Caco-2 (cell line): ENCODE measurements at regions of chr6 and their contacts with region 1.

Region 1: DNA sequence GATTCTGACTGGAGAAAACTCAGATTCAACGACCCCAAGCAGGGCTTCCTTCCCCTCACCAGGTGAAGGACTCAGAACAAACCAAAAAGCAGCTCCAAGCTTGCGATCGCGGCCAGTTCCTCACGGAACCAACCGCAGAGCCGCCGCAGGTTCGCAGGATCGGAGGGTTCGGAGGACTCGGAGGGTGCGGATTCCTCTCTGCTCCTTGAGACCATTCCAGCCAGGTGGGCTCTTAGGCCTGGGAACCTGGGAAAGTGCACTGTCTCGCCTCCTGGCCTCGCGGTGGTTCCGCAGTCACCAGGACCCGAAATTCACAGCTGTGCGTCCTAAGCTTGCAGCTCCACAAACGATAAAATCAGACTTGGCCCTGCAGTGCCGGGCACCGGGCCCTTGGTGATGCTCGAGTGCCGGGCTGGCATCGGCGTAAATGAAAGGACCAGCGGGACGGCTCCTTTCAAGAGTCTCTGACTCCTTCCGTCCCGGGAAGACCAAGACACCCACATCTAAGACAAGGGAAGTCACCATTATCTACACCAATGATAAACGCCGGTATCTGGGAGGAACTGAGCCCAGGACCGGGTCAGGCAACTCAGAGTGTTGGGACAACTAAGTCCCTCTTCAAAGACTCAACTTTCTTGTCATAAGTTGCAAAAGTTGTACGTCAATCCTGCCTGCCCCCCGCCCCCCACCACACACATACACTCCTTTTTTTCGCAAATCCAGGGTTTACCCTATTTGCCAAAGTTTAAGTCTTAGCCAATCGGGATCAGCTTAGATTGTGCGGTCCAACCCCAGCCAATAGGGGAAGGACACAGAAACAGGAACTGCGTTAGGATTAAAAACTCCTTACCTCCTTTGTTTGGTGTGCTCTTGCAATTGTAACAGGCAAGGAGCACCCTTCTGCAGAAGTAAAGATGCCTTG is 69.8 kb upstream of the PRSS16 start:
- DNase-seq: peak; percentile 85 to 86
- H3K4me3 ChIP-seq: peak overlapping the region; percentile 94
- H3K4me3 Mint-ChIP-seq: peak overlapping the region; percentile 90
- H3K27ac Mint-ChIP-seq: peak overlapping the region; percentile 91
- H3K4me1 ChIP-seq: no peaks in the 10 kb centered on the region
- H3K4me1 Mint-ChIP-seq: peaks cover 6% of the 10 kb centered on the region
- H3K27me3 ChIP-seq: no peaks in the 10 kb centered on the region
- H3K27me3 Mint-ChIP-seq: no peaks in the 10 kb centered on the region
- CTCF ChIP-seq: peak; percentile 32 to 66

Region 2: DNA sequence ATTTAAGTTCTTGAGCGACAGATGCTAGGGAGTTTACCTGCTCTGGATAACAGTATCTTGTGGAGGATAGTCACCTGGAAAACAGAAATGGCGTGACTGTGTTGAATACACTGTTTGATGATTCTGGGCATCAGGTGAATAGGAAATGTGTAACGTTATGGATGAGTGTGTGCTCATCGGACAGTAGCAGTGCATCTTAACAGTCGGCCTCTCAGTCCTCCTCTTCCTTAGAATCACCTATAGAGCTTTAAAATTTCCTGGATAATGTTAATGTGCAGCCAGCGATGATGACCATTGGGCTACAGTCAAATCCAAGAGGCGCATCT is 516.8 kb after region 1 on chr6:
- CTCF ChIA-PET with region 1: no interaction called
- POLR2A ChIA-PET with region 1: interaction called, 15 read pairs
- intact Hi-C with region 1: no loop called
- DNase-seq: no peak
- H3K4me3 ChIP-seq: peak overlapping the region; percentile 63
- H3K4me3 Mint-ChIP-seq: peak overlapping the region; percentile 95
- H3K27ac Mint-ChIP-seq: peak overlapping the region; percentile 91
- H3K4me1 ChIP-seq: 0 out of 2 replicates have a peak, but pooled peaks cover 3% of the 10 kb centered on the region
- H3K4me1 Mint-ChIP-seq: peaks cover 6% of the 10 kb centered on the region
- H3K27me3 ChIP-seq: no peaks in the 10 kb centered on the region
- H3K27me3 Mint-ChIP-seq: no peaks in the 10 kb centered on the region
- CTCF ChIP-seq: no peak